PC-9 (cell line): ENCODE measurements at regions of chr17 and their contacts with region 1.

Region 1: GRCh38 chr17:1684378-1685189 is at the start of gene PRPF8:
- DNase-seq: peak; percentile 93 to 99
- H3K4me3 ChIP-seq: peak within 1 kb of the TSS; percentile 77
- H3K27ac ChIP-seq: peak within 1 kb of the TSS; percentile 59
- H3K4me1 ChIP-seq: peaks cover 29% of the 10 kb centered on the region
- H3K27me3 ChIP-seq: no peaks in the 10 kb centered on the region
- CTCF ChIP-seq: no peak
- total RNA-seq, gene PRPF8: 437 and 496 TPM in 2 replicates

Region 2: DNA sequence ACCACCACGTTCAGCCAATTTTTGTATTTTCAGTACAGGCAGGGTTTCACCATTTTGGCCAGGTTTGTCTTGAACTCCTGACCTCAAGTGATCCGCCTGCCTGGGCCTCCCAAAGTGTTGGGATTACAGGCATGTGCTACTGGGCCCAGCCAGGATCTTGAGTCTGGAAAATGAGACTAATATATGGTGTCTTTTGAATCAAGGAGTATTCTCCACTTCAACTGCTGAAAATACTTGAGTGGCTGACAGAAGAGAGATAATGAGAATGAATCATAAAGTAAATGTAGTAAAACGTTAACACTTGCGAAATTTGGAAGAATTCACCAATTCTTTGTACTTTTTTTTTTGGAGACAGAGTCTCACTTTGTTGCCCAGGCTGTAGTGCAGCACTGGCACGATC is 128.5 kb after region 1 on chr17:
- CTCF ChIA-PET with region 1: no interaction called
- POLR2A ChIA-PET with region 1: interaction called, 12 read pairs
- intact Hi-C with region 1: no loop called
- DNase-seq: peak in 1 of 2 experiments; percentile 35
- H3K4me3 ChIP-seq: no peak overlapping the region
- H3K27ac ChIP-seq: no peak overlapping the region
- H3K4me1 ChIP-seq: peaks cover 14% of the 10 kb centered on the region; the same call in 1 of the 2 replicates
- H3K27me3 ChIP-seq: no peaks in the 10 kb centered on the region
- CTCF ChIP-seq: no peak

Region 3: DNA sequence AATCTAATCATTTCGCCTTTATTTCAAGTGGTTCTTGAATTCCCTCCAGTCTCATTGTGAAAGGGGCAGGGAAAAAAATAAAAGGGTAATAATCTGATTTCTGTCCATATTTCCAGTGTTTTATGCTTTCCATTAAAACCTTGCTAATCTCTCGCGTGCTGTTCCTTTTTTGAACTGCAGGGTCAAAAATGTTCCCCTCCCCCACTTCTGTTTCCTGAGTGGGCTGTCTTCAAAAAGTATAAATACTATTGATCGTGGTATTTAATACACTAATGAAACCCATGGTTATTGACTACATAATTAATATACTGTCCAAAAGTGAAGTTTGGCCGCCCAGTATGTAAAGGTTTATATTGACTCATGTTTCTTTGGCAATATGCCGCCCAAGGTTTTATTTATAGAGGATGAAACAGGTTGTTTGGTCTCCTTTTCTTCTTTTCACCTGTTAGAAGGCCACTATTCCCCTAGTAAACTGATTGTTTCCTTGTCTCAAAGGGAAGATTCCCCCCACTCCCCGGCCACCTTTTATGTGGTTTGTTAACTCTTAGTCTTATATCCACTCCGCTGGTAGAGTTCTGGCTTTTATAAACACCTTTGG is 214.9 kb after region 1 on chr17:
- CTCF ChIA-PET with region 1: no interaction called
- POLR2A ChIA-PET with region 1: interaction called, 26 read pairs
- intact Hi-C with region 1: no loop called
- DNase-seq: no peak
- H3K4me3 ChIP-seq: no peak overlapping the region
- H3K27ac ChIP-seq: no peak overlapping the region
- H3K4me1 ChIP-seq: peaks cover 6% of the 10 kb centered on the region
- H3K27me3 ChIP-seq: no peaks in the 10 kb centered on the region
- CTCF ChIP-seq: peak; percentile 41; the same call in 1 of the 2 replicates